ENCODE measurements at regions of chr17 and their contacts with region 1.

Region 1: GRCh38 chr17:48997083-48997826 is at the start of gene IGF2BP1:
- DNase-seq: peak; percentile 77
- ATAC-seq: peak; percentile 34
- H3K4me3 Mint-ChIP-seq: peak within 1 kb of the TSS; percentile 83
- H3K27ac Mint-ChIP-seq: peak within 1 kb of the TSS; percentile 98
- H3K4me1 Mint-ChIP-seq: peaks cover 43% of the 10 kb centered on the region
- H3K27me3 Mint-ChIP-seq: no peaks in the 10 kb centered on the region
- CTCF ChIP-seq: no peak
- total RNA-seq, gene IGF2BP1: 392 to 434 TPM (median 423 TPM) in 3 replicates

Region 2: GRCh38 chr17:48892940-48893645 is 104.2 kb before region 1 on chr17:
- CTCF ChIA-PET with region 1: no interaction called
- POLR2A ChIA-PET with region 1: interaction called, 22 read pairs
- DNase-seq: no peak
- ATAC-seq: no peak
- H3K4me3 Mint-ChIP-seq: peak overlapping the region; percentile 96
- H3K27ac Mint-ChIP-seq: peak overlapping the region; percentile 98
- H3K4me1 Mint-ChIP-seq: peaks cover 11% of the 10 kb centered on the region
- H3K27me3 Mint-ChIP-seq: no peaks in the 10 kb centered on the region
- CTCF ChIP-seq: no peak

Region 3: DNA sequence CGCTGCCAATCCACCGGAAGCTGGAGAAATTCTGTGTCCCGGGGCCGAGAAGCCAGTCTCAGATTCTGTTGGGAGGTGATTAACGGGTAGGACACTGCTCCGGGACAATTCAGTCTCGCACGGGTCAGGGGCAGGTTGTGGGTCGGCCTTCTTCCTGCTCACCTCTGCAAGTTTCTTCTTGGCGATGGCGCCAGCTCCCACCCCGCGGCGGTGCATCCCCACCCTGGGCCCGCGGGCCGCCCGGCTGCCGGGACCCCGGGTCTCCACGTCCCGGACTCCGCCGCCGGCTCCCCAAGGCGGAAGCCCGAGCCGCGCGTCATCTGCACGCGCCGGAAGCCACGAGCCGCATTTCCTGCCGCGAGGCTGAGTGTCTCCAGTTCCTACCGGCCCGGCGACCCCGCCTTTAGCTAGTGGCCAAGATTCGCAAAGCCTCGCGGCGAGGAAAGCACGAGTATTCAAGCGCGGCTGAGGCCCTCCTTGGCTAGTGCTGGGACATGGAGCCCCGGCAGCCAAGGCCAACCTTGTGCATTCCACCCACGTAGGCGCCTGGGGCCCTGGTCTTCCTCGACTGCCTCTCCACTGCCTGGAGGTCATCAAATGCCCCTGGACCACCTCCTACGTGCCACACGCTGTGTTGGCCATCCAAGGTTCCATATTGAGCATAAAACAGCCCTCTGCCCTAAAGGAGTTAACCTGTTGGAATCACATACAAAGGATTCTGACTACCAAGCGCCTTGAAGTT is 52.6 kb before region 1 on chr17 and contains the start of gene SNF8:
- CTCF ChIA-PET with region 1: interaction called, 4 read pairs
- POLR2A ChIA-PET with region 1: interaction called, 10 read pairs
- DNase-seq: peak; percentile 97
- ATAC-seq: peak; percentile 91
- H3K4me3 Mint-ChIP-seq: peak within 1 kb of the TSS; percentile 100
- H3K27ac Mint-ChIP-seq: peak within 1 kb of the TSS; percentile 97
- H3K4me1 Mint-ChIP-seq: peaks cover 10% of the 10 kb centered on the region
- H3K27me3 Mint-ChIP-seq: no peaks in the 10 kb centered on the region; the same call in 1 of the 2 replicates
- CTCF ChIP-seq: no peak
- total RNA-seq, gene SNF8: 116 to 136 TPM (median 127 TPM) in 3 replicates

Region 4: GRCh38 chr17:48954300-48954755 is 42.9 kb before region 1 on chr17:
- CTCF ChIA-PET with region 1: interaction called, 13 read pairs
- POLR2A ChIA-PET with region 1: no interaction called
- DNase-seq: peak; percentile 68
- ATAC-seq: peak; percentile 93
- H3K4me3 Mint-ChIP-seq: no peak overlapping the region
- H3K27ac Mint-ChIP-seq: peak overlapping the region; percentile 49; the same call in 1 of the 2 replicates
- H3K4me1 Mint-ChIP-seq: peaks cover 11% of the 10 kb centered on the region
- H3K27me3 Mint-ChIP-seq: no peaks in the 10 kb centered on the region
- CTCF ChIP-seq: no peak

Region 5: DNA sequence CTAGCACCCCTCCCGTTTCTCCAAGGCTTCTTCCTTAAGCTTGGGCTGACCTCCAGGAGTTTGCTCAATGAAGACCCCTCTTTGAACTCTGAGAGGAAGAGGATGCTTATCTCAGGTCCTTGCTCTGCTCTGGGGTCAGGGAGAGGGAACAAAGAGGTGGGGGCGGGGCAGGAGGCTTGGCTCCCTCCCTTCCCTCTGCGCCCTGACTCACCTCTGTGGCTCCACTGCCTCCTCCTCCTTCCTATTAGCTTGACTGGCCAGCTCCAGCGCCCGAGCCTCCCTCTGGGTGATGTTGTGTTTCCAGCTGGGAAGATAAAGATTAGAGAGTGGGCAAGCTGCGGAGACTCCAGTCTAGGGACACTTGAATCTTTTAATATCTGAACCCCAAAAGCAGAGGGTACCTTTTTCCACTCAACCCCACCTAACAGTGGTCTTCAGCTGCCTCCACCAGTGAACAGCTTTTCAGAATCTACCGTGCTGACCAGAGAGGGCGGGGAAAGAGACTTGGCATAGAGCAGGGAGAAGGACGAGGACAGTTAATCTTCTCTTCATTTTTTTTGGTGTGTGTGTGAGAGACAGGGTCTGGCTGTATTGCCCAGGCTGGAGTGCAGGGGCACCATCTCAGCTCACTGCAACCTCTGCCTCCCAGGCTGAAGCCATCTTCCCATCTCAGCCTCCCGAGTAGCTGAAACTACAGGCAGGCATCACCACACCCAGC is 35.6 kb before region 1 on chr17:
- CTCF ChIA-PET with region 1: interaction called, 6 read pairs
- POLR2A ChIA-PET with region 1: interaction called, 17 read pairs
- DNase-seq: peak; percentile 45
- ATAC-seq: peak; percentile 90
- H3K4me3 Mint-ChIP-seq: peak overlapping the region; percentile 53
- H3K27ac Mint-ChIP-seq: no peak overlapping the region
- H3K4me1 Mint-ChIP-seq: peaks cover 29% of the 10 kb centered on the region
- H3K27me3 Mint-ChIP-seq: no peaks in the 10 kb centered on the region; the same call in 1 of the 2 replicates
- CTCF ChIP-seq: no peak

Region 6: DNA sequence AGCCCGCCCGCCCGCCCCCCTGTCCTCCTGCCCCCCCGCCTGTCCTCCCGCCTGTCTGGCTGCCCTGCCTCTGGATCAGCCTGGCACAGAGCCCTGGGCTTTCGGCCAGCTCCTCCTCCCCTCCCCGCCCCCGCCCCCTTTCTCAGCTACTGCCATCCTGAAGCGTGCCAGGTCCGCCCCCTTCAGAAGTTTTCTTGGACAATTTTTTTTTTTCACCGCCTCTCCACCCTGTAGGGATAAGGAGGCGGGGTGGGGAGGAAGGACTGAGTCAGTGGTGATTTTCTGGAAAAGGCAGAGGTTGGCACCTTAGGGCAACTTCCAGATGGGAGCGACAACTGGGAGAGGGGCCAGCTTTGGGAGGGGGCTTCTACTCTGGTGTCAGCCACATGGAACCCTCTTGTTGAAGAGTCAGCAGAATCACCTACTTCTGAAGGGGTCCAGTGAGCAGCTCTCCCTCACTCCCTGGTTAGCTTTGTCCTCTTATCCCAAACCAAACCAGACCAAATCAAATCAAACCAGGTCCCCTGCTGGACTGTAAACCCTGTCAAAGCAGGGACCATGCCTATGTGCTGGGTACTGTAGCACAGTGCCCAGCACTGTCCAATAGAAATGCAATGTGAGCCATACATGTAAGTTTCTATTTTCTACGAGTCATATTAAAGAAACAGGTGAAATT is 19.7 kb after region 1 on chr17:
- CTCF ChIA-PET with region 1: interaction called, 39 read pairs
- POLR2A ChIA-PET with region 1: interaction called, 65 read pairs
- DNase-seq: no peak
- ATAC-seq: no peak
- H3K4me3 Mint-ChIP-seq: peak overlapping the region; percentile 3; the same call in 1 of the 2 replicates
- H3K27ac Mint-ChIP-seq: peak overlapping the region; percentile 72
- H3K4me1 Mint-ChIP-seq: peaks cover 76% of the 10 kb centered on the region
- H3K27me3 Mint-ChIP-seq: no peaks in the 10 kb centered on the region
- CTCF ChIP-seq: no peak

Region 7: DNA sequence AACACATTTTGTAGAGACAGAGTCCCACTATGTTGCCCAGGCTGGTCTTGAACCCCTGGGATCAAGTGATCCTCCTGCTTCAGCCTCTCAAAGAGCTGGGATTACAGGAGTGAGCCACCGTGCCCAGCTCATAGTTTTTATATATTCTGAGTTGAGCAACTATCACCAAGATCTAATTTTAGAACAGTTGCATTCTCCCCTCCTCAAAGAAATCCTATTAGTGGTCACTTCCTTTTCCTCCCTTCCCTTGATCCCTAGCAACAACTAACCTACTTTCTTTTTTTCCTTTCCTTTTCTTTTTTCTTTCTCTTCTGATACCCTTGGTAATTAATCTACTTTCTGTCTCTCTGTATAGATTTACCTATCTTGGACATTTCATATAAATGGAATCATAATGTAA is 73.9 kb after region 1 on chr17:
- CTCF ChIA-PET with region 1: no interaction called
- POLR2A ChIA-PET with region 1: no interaction called
- DNase-seq: no peak
- ATAC-seq: no peak
- H3K4me3 Mint-ChIP-seq: no peak overlapping the region
- H3K27ac Mint-ChIP-seq: no peak overlapping the region
- H3K4me1 Mint-ChIP-seq: peaks cover 5% of the 10 kb centered on the region
- H3K27me3 Mint-ChIP-seq: no peaks in the 10 kb centered on the region; the same call in 1 of the 2 replicates
- CTCF ChIP-seq: no peak